ENCODE measurements at regions of chr9 and their contacts with region 1.

Region 1: GRCh38 chr9:106111045-106111717 is 416.8 kb downstream of the TMEM38B start:
- DNase-seq: no peak
- H3K4me3 ChIP-seq: no peak overlapping the region
- H3K27ac ChIP-seq: no peak overlapping the region
- H3K4me1 ChIP-seq: no peaks in the 10 kb centered on the region
- H3K27me3 ChIP-seq: no peaks in the 10 kb centered on the region
- CTCF ChIP-seq: no peak
- POLR2A ChIP-seq: no peak

Region 2: DNA sequence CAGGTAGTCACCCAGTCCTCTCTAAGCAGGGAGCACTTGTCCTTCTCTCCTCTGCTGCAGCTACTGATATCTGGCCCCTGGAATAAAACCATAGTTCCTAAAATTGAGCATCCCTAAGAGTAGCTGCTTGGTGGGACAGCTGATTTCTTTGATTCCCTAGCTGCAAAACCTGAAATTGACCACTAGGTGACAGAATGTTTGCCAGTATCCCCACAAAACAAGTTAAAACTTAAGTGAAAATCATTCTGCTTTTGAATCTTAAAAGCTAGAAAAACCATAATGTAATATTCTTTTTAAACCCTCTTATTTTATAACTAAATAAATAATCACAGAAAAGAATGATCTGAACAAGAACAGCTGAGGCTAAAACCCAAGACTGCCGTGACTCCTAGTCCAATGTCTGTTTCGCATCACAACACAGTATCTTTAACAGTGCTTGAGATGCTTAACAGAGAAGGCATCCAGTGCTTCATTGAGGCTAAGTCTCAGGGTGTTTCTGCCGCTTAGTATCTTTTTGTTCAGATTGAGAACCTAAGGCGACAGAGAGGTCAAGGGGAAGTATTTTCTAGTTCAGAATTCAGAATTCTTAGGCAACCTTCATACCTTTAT is 473.3 kb before region 1 on chr9:
- intact Hi-C with region 1: no loop called
- DNase-seq: no peak
- H3K4me3 ChIP-seq: no peak overlapping the region
- H3K27ac ChIP-seq: no peak overlapping the region
- H3K4me1 ChIP-seq: no peaks in the 10 kb centered on the region
- H3K27me3 ChIP-seq: no peaks in the 10 kb centered on the region
- CTCF ChIP-seq: peak in 2 of 6 experiments; percentile 19 to 25
- POLR2A ChIP-seq: no peak

Region 3: GRCh38 chr9:106059886-106060285 is 51.3 kb before region 1 on chr9:
- intact Hi-C with region 1: loop called (anchors 10 kb)
- DNase-seq: no peak
- H3K4me3 ChIP-seq: no peak overlapping the region
- H3K27ac ChIP-seq: no peak overlapping the region
- H3K4me1 ChIP-seq: no peaks in the 10 kb centered on the region
- H3K27me3 ChIP-seq: no peaks in the 10 kb centered on the region
- CTCF ChIP-seq: no peak
- POLR2A ChIP-seq: no peak

Measured in thyroid gland (tissue), 4 donors.